OCI-LY7 (cell line): ENCODE measurements at regions of chr1 and their contacts with region 1.

Region 1: DNA sequence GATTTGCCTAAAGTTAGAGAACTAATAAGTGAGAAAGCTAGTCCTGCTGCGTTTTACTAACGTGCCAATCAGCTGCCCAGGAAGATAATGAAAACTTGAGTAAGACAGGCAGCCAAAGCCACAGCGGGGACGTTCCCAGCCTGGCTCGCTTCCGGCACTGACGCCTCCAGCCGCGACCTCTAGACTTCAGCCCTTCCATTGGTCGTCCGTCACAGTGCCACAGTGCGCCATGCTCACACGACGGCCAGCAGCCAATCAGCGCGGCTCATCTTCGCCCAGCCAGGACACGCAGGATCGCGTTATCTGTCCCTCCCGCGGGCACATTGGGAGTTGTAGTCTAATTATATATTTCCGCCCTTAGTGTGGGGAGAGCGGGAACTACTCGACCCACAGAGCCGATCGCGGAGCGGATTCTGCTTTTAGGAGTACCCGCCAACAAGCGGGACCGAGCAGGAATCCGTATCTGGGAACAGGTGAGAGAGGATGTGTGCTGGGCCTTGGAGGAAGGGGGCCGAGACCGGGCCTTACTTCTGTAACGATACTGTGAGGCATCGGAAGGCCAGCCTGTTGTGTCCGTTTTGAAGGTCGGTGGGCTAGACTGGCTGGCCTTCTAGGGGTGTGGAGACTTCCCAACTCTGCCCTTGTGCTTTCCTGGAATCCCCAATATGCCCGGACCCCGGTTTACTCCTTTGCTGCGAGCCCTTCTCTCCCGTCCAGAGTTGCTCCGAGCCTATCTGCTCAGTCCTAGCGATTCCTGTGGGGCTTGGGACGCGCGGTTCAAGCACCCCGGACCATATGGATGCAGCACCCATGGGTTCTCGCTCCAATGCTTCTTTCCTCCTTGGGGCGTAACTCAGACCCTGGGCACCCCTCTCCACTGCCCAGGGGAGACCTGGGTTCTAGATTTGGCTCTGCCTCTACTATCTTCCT is at the start of gene FDPS:
- DNase-seq: peak; percentile 99
- H3K4me3 ChIP-seq: peak within 1 kb of the TSS; percentile 93
- H3K27ac ChIP-seq: peak within 1 kb of the TSS; percentile 88
- H3K4me1 ChIP-seq: peaks cover 26% of the 10 kb centered on the region
- CTCF ChIP-seq: no peak
- total RNA-seq, gene FDPS: 254 and 263 TPM in 2 replicates

Region 2: DNA sequence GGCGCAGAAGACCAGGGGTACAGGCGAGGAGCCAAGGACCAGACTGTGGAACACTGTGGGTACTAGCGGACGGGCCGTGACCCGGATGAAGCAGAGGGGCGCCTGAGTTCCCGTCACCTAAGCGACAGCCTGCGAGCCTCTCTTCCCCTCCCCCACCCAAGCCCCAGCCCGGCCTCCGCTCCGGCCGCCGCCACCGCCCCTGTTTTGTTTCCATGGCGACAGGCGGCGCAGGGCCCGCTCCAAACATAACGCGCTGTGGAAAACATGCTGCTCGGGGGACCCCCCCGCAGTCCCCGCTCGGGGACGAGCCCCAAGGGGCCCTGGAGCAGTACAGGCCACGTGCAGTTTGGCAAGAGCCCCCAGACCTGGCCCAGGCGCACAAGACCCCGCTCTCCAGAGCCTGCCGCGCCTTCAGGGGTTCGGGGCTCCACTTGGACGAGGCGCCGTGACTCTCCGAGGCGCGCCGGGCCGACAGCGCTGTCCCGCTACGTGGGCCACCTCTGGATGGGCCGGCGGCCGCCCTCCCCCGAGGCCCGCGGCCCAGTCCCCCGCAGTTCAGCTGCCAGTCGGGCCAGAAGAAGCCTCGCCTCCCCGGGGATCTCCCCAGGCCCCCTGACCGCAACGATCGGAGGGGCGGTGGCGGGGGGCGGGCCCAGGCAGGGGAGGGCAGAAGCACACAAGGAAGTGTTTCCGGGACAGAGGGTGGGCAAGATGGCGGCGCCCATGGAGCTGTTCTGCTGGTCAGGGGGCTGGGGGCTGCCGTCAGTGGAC is 100.0 kb before region 1 on chr1 and contains the start of gene MTX1:
- CTCF ChIA-PET with region 1: no interaction called
- POLR2A ChIA-PET with region 1: no interaction called
- intact Hi-C with region 1: loop called (anchors 5 kb)
- DNase-seq: peak; percentile 87
- H3K4me3 ChIP-seq: peak within 1 kb of the TSS; percentile 90
- H3K27ac ChIP-seq: peak within 1 kb of the TSS; percentile 77
- H3K4me1 ChIP-seq: peaks cover 28% of the 10 kb centered on the region
- CTCF ChIP-seq: no peak
- total RNA-seq, gene MTX1: 67.6 and 70.2 TPM in 2 replicates

Region 3: GRCh38 chr1:155277070-155277895 is 31.5 kb before region 1 on chr1 and contains the start of gene HCN3:
- CTCF ChIA-PET with region 1: interaction called, 3 read pairs
- POLR2A ChIA-PET with region 1: interaction called, 4 read pairs
- intact Hi-C with region 1: loop called (anchors 1 kb)
- DNase-seq: peak; percentile 98
- H3K4me3 ChIP-seq: peak within 1 kb of the TSS; percentile 82
- H3K27ac ChIP-seq: peak within 1 kb of the TSS; percentile 21
- H3K4me1 ChIP-seq: peaks cover 39% of the 10 kb centered on the region
- CTCF ChIP-seq: peak; percentile 79
- total RNA-seq, gene HCN3: 4.9 and 6.7 TPM in 2 replicates

Region 4: DNA sequence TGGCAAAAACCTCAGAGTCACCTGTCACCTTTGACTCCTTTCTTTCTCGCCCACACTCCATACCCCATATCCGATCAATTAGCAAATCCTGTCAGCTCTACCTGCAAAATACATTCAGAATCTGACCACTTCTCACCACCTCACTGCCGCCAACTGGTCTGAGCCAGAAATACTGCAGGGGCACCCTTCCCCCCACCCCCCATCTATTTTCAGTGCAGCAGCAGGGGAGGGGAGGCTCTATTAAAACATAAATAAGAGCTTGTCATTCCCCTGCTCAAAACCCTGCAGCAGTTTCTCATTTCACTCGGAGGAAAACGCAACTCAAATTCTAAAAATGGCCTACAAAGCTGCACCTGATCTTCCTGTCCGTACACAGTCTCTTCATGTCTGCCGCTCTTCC is 11.4 kb before region 1 on chr1:
- CTCF ChIA-PET with region 1: no interaction called
- POLR2A ChIA-PET with region 1: interaction called, 10 read pairs
- intact Hi-C with region 1: no loop called
- DNase-seq: peak; percentile 57
- H3K4me3 ChIP-seq: peak overlapping the region; percentile 27
- H3K27ac ChIP-seq: peak overlapping the region; percentile 57
- H3K4me1 ChIP-seq: peaks cover 17% of the 10 kb centered on the region
- CTCF ChIP-seq: peak; percentile 64; the same call in 1 of the 2 replicates

Region 5: GRCh38 chr1:155323798-155324610 is 15.2 kb after region 1 on chr1:
- CTCF ChIA-PET with region 1: no interaction called
- POLR2A ChIA-PET with region 1: no interaction called
- intact Hi-C with region 1: loop called (anchors 1 kb)
- DNase-seq: peak; percentile 83
- H3K4me3 ChIP-seq: peak overlapping the region; percentile 78
- H3K27ac ChIP-seq: peak overlapping the region; percentile 53
- H3K4me1 ChIP-seq: peaks cover 23% of the 10 kb centered on the region
- CTCF ChIP-seq: no peak

Region 6: DNA sequence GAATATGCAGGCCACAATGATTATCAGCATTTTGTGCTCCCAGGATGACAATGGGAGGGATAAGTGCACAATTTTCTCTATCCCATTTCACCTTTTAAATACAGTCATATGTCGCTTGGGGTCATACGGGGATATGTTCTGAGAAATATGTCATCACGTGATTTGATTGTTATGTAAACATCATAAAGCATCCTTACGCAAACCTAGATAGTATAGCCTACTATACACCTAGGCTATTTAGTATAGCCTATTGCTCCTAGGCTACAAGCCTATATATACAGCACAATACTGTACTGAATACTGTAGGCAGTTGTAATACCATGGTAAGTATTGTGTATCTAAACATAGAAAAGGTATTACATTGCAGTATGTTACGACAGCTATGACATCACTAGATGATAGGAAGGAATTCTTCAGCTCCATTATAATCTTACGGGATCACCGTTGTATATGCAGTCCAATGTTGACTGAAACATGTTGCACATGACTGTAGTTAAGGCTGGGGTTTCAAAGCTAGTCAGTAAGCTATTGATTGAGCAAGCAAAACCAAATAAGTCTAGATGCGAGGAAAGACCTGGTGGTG is 30.8 kb after region 1 on chr1:
- CTCF ChIA-PET with region 1: no interaction called
- POLR2A ChIA-PET with region 1: no interaction called
- intact Hi-C with region 1: no loop called
- DNase-seq: no peak
- H3K4me3 ChIP-seq: no peak overlapping the region
- H3K27ac ChIP-seq: no peak overlapping the region
- H3K4me1 ChIP-seq: no peaks in the 10 kb centered on the region
- CTCF ChIP-seq: no peak

Region 7: GRCh38 chr1:155466996-155467395 is 158.2 kb after region 1 on chr1:
- CTCF ChIA-PET with region 1: no interaction called
- POLR2A ChIA-PET with region 1: no interaction called
- intact Hi-C with region 1: no loop called
- DNase-seq: no peak
- H3K4me3 ChIP-seq: no peak overlapping the region
- H3K27ac ChIP-seq: no peak overlapping the region
- H3K4me1 ChIP-seq: peaks cover 6% of the 10 kb centered on the region
- CTCF ChIP-seq: no peak